ENCODE measurements at regions of chr11 and their contacts with region 1.

Region 1: DNA sequence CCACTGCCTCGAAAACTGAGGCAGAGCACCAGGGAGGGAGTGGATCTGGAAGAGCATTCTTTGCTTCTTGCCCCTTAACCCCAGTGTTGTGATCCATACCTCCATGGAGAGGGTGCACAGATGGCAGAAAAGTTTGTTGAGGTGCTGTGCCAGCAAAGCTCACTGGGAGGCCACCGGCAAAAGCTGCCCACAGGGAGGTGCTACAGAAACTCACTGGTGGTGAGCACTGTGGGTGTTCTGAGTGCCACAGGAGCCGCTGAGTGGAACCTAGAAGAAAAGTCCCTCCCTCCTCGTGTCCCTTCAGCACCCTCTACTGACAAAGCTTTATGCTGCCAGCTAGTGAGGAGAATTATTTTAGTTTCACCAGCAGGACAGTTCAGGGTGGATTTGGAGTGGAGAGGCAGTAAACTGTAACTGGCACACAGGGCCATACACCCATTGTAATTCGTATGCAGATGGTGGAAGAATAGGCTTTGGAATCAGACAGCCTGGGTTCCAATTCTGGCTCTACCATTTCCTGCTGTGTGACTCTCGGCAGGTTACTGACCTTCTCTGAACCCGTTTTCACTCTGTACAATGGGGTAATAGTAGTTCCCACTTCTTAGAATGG is 84.6 kb downstream of the SWAP70 start:
- DNase-seq: peak; percentile 66
- H3K4me3 Mint-ChIP-seq: no peak overlapping the region
- H3K27ac Mint-ChIP-seq: no peak overlapping the region
- H3K4me1 Mint-ChIP-seq: peaks cover 34% of the 10 kb centered on the region
- H3K27me3 Mint-ChIP-seq: peaks cover 2% of the 10 kb centered on the region

Region 2: DNA sequence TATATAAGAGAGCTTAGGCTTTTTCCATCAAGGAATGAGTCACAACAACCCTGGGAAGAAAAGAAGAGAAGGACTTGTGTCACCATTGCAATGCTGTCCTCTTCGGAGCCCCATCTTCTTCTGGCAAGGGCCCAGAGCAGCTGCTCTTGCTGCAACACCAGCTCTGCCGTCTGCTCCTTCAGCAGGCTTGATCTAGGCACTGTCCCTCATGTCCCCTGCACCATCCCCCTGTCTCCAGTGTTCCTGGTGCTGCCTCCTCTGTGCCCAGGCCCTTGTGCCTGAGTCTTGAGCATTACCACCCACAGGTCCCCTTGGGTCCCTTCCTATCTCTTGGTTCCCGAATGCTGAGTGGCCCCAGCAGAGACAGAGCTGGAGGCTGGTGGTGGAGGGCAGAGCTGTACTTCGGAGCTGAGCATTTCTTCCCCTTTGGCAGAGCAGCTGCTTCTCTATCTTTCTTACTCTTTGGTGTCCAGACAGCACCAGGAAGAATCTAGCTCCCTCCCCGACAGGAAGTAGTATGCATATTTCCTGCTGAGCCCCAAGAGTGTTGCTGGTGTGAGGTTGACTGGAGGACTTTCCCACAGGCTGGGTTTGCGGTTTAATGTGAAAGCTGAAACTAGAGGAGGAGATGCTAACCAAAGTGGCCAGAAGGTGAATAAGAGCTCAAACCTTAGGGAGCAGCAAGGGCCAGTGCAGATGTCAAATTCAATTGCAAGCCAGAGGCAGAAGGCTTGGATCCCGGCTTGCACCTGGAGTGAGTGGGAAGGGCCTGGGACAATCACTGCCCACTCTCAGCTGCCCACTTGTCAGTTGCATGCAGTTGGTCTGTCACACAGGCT is 147.2 kb before region 1 on chr11:
- intact Hi-C with region 1: loop called (anchors 1 kb)
- DNase-seq: peak; percentile 74
- H3K4me3 Mint-ChIP-seq: peak overlapping the region; percentile 71
- H3K27ac Mint-ChIP-seq: peak overlapping the region; percentile 90
- H3K4me1 Mint-ChIP-seq: peaks cover 34% of the 10 kb centered on the region
- H3K27me3 Mint-ChIP-seq: peaks cover 4% of the 10 kb centered on the region

Region 3: GRCh38 chr11:9663699-9664275 is 84.7 kb before region 1 on chr11 and contains the start of gene SWAP70:
- intact Hi-C with region 1: loop called (anchors 1 kb)
- DNase-seq: peak; percentile 79
- H3K4me3 Mint-ChIP-seq: peak within 1 kb of the TSS; percentile 88
- H3K27ac Mint-ChIP-seq: peak within 1 kb of the TSS; percentile 31
- H3K4me1 Mint-ChIP-seq: peaks cover 18% of the 10 kb centered on the region
- H3K27me3 Mint-ChIP-seq: peaks cover 27% of the 10 kb centered on the region
- total RNA-seq, gene SWAP70: 6.3 and 8.5 TPM in 2 replicates

Region 4: GRCh38 chr11:9787981-9788521 is 39.6 kb after region 1 on chr11:
- intact Hi-C with region 1: no loop called
- DNase-seq: no peak
- H3K4me3 Mint-ChIP-seq: no peak overlapping the region
- H3K27ac Mint-ChIP-seq: no peak overlapping the region
- H3K4me1 Mint-ChIP-seq: no peaks in the 10 kb centered on the region
- H3K27me3 Mint-ChIP-seq: no peaks in the 10 kb centered on the region

Measured in activated T-helper 1 cell treated with anti-CD3 and anti-CD28 coated beads, Interleukin-12 subunit alpha, Interleukin-12 subunit beta, Interleukin-2, Interleukin-4 antibody, amounts not matched to agents 30 ng/mL and 10 ng/mL and 1 ng/mL, durations not matched to agents 14 hours and 24 hours and 36 hours (primary cell).